ENCODE measurements at regions of chr1 and their contacts with region 1.

Region 1: GRCh38 chr1:117093870-117094621 is 27.5 kb downstream of the TRIM45 start:
- DNase-seq: peak; percentile 57
- H3K4me3 Mint-ChIP-seq: no peak overlapping the region
- H3K27ac Mint-ChIP-seq: no peak overlapping the region
- H3K4me1 Mint-ChIP-seq: peaks cover 16% of the 10 kb centered on the region
- H3K27me3 Mint-ChIP-seq: no peaks in the 10 kb centered on the region

Region 2: DNA sequence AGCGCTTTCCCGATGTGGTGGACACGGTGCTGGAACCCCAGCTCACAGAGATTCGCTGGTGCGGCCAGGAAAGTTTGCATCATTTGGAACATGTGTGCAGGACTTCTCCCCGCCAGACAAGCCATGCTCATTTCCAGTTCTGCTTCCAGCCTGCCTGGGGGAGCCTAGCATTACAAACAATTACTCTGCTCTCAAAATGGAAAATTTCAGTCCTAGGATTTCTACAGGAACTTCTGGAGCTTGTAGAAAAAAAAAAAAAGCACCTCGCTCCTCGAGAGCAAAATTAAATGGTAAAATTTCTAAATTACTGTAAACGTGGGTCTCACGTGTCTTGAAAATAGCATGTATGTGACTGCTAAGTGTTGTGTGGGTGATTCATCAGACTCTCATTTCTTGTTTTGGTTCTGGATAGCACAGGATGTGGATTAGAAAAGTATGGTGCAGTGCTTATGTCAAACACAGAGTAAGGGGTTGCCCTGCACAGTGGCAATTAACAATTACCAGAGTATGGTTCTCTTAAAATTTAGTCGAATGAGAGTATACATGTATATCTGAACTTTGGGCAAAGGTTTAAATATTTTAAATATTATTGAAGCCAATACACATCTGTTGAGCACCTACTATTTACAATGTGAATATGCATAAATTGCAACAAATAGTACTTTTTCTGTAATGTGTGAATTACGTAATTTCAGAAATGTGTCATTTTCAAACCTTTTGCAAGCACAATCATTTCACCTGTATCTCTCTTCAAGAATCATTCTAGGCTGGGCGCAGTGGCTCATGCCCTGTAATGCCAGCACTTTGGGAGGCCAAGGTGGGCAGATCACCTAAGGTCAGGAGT is 246.1 kb before region 1 on chr1:
- CTCF ChIA-PET with region 1: no interaction called
- POLR2A ChIA-PET with region 1: no interaction called
- intact Hi-C with region 1: no loop called
- DNase-seq: peak; percentile 61
- H3K4me3 Mint-ChIP-seq: no peak overlapping the region
- H3K27ac Mint-ChIP-seq: peak overlapping the region; percentile 34
- H3K4me1 Mint-ChIP-seq: peaks cover 27% of the 10 kb centered on the region
- H3K27me3 Mint-ChIP-seq: no peaks in the 10 kb centered on the region

Region 3: DNA sequence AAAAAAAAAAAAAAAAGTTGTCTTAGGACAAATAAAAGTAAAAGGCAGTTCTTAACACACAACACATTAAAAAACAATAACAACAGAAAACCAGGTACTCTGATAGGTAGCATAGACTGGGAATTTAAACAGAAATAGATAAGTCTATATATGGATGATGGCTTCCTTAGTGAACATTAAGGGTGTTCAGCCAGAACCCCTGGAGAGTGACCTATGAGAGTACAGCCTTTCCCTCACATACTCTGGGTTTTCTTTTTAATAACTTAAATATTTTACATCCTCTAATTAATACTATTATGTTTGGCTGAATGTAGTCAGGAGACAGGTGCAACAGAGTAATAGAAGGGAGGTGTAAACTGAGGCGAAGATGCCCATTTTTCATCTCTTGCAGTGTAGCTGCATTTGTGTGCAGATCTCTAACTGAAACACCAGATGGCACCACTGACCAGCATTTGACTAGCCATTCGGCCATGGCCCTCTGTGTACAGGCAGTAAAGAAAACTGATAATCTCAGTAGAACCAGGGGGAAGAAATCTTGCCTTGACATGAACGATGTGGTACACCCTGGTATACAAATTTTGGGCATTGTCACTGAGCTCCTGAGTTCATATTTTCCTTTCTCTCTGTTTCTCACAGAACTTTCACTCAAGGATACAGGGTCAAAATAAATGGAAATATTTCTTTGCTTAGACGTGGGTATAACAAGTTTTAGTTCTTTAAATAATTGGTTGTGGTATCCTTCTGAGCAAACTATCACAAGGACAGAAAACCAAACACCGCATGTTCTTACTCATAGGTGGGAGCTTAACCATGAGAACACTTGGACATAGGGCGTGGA is 26.3 kb before region 1 on chr1:
- CTCF ChIA-PET with region 1: interaction called, 43 read pairs
- POLR2A ChIA-PET with region 1: no interaction called
- intact Hi-C with region 1: no loop called
- DNase-seq: peak; percentile 60
- H3K4me3 Mint-ChIP-seq: no peak overlapping the region
- H3K27ac Mint-ChIP-seq: no peak overlapping the region
- H3K4me1 Mint-ChIP-seq: peaks cover 38% of the 10 kb centered on the region
- H3K27me3 Mint-ChIP-seq: no peaks in the 10 kb centered on the region

Region 4: GRCh38 chr1:117077267-117077666 is 16.8 kb before region 1 on chr1:
- CTCF ChIA-PET with region 1: interaction called, 11 read pairs
- POLR2A ChIA-PET with region 1: interaction called, 6 read pairs
- intact Hi-C with region 1: loop called (anchors 1 kb)
- DNase-seq: peak; percentile 79
- H3K4me3 Mint-ChIP-seq: no peak overlapping the region
- H3K27ac Mint-ChIP-seq: peak overlapping the region; percentile 71
- H3K4me1 Mint-ChIP-seq: peaks cover 30% of the 10 kb centered on the region
- H3K27me3 Mint-ChIP-seq: no peaks in the 10 kb centered on the region

Region 5: GRCh38 chr1:117142200-117142599 is 48.2 kb after region 1 on chr1:
- CTCF ChIA-PET with region 1: no interaction called
- POLR2A ChIA-PET with region 1: no interaction called
- intact Hi-C with region 1: no loop called
- DNase-seq: no peak
- H3K4me3 Mint-ChIP-seq: no peak overlapping the region
- H3K27ac Mint-ChIP-seq: no peak overlapping the region
- H3K4me1 Mint-ChIP-seq: no peaks in the 10 kb centered on the region
- H3K27me3 Mint-ChIP-seq: peaks cover 7% of the 10 kb centered on the region

Measured in activated CD4-positive, alpha-beta memory T cell treated with anti-CD3 and anti-CD28 coated beads for 36 hours (primary cell).